ENCODE measurements at regions of chr3 and their contacts with region 1.

Region 1: DNA sequence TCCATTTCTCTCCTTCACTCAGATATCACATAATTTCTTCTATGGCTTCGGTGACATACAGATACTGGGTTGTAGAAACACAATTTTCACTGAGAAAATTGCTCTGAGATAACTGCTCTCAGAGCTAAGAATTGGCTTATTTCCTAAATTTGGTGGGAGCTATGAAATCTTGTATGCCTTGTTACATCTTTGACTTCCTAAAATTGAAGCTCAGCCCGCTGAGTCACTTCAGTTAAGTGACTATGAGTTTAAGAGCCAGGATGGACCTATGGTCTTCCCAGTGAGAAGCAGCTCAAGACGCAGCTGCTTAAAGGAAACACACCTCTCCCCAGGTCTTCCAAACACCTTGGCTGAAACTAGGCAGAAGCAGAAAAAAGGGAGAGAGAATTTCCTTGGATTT is 56.4 kb downstream of the EFHB start:
- DNase-seq: no peak
- H3K4me3 ChIP-seq: no peak overlapping the region
- H3K27me3 ChIP-seq: no peaks in the 10 kb centered on the region
- CTCF ChIP-seq: no peak

Region 2: DNA sequence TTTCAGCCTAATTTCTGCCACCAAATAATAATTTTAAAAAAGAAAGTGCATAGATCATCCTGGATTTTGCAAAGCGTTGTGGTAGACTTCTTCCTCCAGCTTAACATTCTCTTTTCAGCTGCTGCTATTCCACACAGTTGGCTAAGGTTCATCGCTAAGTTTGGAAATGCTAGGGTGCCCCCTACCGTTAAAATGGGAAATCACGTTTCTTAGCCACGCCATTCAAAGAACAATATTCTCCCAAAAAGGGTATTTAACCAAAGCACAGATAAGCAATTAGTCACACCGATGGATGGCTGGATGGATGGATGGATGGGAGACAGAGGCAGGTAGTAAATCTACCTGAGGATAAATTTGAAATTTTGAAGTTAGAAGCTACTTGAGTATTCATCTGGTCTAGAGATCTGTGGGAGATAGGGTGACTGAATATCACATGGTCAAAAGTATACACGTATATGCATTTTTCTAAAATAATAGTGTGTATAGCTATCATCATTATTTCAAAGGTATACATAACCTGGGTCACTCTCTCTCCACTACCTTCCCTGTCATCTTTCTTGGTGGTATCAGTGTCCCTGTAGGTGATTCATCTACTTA is 10.8 kb before region 1 on chr3:
- CTCF ChIA-PET with region 1: interaction called, 22 read pairs
- POLR2A ChIA-PET with region 1: no interaction called
- DNase-seq: no peak
- H3K4me3 ChIP-seq: no peak overlapping the region
- H3K27me3 ChIP-seq: no peaks in the 10 kb centered on the region
- CTCF ChIP-seq: peak; percentile 78

Region 3: DNA sequence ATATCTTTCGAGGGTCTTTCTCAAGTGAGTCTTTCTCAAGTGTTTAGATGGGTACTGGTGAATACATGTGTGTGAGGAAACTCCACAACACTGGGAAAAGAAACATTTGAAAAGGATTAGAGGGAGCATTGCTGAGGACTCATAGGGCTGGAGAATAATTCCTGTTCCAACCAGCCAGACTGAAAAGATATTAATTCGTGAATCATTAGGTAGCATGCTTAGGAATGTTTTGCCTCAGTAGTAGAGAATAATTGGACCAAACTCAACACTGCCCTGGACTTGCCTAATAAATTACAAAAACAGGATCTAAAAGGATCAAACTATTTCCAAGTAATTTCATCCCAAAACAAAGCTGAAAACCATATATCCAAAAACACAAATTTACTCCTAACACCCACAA is 117.1 kb after region 1 on chr3:
- CTCF ChIA-PET with region 1: no interaction called
- POLR2A ChIA-PET with region 1: no interaction called
- DNase-seq: no peak
- H3K4me3 ChIP-seq: no peak overlapping the region
- H3K27me3 ChIP-seq: no peaks in the 10 kb centered on the region
- CTCF ChIP-seq: no peak

Measured in BJ (cell line).